Left ventricle myocardium superior (tissue), 1 donor: ENCODE measurements at regions of chr12 and their contacts with region 1.

Region 1: DNA sequence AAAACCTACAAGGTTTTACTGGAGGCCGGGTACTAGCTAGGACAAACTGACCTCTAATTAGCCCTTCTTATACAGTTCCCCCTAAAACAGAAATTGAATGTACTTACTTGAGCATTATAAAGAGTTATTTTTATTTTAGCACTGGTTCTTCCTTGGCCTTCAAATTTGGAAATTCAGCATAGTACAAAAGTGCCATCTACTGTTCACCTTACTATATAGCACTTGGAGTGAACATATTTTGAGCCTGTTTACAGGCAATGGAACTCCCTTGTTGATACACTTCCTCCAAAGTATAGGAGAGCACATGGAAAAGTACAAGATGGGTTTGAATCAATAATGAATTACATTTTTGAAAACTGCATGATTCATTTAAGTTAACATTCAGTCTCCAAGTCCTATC is 3.9 kb upstream of the POC1B start:
- DNase-seq: no peak
- ATAC-seq: no peak

Region 2: DNA sequence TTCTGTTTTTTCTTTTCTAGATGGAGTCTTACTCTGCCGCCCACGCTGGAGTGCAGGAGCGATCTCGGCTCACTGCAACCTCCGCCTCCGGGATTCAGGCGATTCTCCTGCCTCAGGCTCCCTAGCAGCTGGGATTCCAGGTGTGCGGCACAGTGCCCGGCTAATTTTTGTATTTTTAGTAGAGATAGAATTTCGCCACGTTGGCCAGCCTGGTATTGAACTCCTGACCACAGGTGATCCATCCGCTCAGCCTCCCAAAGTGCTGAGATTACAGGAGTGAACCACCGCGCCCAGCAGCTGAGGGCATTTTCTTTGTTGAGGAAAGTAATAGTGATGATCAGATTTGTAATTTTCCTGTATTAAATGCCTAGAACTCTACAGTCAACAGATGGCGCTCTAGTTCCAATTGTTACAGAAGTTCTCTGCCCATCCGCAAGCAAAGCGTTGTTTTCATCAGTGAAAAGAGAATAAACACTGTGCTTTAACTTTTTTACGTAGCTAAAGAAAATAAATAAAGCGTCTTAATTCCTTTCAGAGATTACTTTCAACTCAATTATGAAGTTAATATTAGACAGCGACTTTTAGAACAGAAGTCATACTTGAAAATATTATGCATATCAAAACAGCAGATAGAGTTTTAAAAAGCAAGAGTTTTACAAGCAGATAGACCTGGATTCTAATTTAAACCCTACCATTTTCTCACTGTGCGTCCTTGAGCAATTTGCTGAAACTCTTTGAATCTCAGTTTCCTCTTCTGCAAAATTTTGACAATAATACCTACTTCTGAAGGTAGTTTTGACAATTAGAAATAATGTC is 512.6 kb before region 1 on chr12:
- intact Hi-C with region 1: loop called (anchors 2 kb)
- DNase-seq: no peak
- ATAC-seq: peak; percentile 59

Region 3: DNA sequence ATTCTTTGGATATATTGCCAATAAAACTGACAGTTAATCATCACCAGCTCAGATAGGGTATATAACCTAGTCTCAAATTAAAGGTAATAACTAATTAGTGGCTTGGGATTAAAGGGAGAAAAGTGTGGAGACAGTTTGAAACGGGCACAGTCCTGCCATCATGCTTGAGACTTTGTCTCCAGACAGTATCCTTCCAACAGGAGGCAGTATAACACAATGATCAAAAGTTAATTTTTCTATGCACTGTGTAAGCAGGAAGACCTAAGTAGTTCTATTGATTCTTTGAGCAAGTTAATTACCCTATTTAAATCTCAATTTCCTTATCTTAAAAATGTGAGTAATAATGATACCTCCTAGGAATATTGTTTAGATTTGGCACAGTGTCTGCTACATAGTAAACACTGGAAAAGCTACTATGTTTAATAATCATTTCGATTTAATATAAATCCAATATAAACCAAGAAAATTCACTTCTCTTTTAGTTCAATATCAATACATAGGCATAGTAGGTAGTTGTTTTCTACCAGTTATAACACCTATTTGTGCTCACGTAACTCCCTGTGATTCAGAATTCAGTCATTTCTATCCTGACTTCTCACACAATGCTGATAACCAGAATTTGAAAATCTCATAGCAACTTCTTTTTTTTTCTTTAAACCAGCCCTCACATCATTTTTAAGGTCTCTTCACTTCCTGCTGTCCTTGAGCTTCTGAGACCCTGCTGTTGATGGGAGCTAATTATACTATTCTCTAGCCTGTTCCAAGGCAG is 58.8 kb before region 1 on chr12:
- intact Hi-C with region 1: loop called (anchors 5 kb)
- DNase-seq: no peak
- ATAC-seq: peak; percentile 68